Gastrocnemius medialis (tissue), 4 donors: ENCODE measurements at regions of chr5 and their contacts with region 1.

Region 1: DNA sequence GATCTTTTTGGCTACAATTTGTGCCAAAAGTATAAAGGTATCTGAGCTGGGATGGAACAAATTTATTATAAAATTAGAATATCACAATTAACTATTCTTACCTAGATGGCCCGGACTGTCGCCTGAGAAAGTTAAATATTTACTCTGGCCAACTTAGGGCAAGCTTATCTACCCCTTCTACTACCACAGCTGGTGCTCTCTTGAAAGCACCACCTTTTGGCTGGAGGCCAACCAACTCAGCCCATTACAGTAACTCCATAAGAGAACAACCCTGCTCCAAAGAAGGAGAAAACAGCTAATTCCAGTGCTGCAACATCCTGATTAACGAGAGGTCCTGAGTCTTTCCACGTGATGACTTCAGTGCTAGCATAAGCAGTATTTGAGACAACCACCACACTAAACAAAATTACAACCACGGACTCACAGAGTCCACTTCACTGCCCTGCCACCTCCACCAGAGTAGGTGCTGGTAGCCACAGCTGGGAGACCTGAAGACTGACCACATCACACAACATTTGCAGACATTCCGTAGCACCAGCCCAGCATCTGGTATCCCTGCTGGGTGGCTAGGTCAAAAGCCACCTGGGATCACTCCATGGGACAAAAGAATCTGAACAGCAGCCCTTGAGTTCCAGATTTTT is 43.2 kb downstream of the RGMB start:
- DNase-seq: no peak
- ATAC-seq: no peak
- H3K4me3 ChIP-seq: no peak overlapping the region
- H3K27ac ChIP-seq: no peak overlapping the region
- H3K4me1 ChIP-seq: no peaks in the 10 kb centered on the region
- H3K27me3 ChIP-seq: no peaks in the 10 kb centered on the region
- CTCF ChIP-seq: no peak
- POLR2A ChIP-seq: no peak

Region 2: GRCh38 chr5:97224112-97224750 is 1592.5 kb before region 1 on chr5:
- in situ Hi-C with region 1: loop called in 1 of 4 experiments (anchors 25 kb)
- intact Hi-C with region 1: no loop called
- DNase-seq: no peak
- ATAC-seq: no peak
- H3K4me3 ChIP-seq: no peak overlapping the region
- H3K27ac ChIP-seq: no peak overlapping the region
- H3K4me1 ChIP-seq: no peaks in the 10 kb centered on the region
- H3K27me3 ChIP-seq: no peaks in the 10 kb centered on the region
- CTCF ChIP-seq: no peak
- POLR2A ChIP-seq: no peak

Region 3: DNA sequence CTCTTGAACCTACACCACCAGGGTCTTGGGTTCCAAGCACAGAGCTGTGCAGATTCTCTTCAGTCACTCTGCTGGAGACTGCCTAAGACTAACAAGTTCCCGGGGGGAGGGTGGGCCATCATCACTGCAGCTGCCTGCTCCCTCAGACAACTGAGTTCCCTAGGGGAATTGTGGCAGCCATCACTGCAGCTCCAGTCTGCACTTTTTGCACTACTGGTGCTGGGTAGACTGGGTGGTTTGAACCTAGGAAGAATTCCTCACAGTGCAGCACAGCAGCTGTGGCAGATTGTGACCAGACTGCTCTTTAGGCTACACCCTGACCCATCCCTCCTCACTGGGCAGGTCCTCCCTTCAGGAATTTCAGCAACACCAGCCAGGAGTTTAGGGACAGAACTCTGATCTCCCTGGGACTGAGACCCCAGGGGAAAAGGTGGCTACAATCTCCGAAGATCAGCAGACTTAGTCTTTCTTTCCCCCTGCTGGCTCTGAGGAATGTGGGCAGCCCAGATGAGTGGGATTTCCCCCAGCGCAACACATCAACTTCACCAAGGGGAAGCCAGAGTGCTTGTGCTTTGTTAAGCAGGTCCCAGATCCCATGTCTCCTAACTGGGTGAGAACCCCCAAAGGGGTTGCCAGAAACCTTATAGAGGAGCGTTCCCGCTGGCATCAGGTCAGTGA is 74.2 kb before region 1 on chr5:
- in situ Hi-C with region 1: no loop called
- intact Hi-C with region 1: no loop called
- DNase-seq: no peak
- ATAC-seq: no peak
- H3K4me3 ChIP-seq: no peak overlapping the region
- H3K27ac ChIP-seq: no peak overlapping the region
- H3K4me1 ChIP-seq: no peaks in the 10 kb centered on the region
- H3K27me3 ChIP-seq: no peaks in the 10 kb centered on the region
- CTCF ChIP-seq: no peak
- POLR2A ChIP-seq: no peak

Region 4: DNA sequence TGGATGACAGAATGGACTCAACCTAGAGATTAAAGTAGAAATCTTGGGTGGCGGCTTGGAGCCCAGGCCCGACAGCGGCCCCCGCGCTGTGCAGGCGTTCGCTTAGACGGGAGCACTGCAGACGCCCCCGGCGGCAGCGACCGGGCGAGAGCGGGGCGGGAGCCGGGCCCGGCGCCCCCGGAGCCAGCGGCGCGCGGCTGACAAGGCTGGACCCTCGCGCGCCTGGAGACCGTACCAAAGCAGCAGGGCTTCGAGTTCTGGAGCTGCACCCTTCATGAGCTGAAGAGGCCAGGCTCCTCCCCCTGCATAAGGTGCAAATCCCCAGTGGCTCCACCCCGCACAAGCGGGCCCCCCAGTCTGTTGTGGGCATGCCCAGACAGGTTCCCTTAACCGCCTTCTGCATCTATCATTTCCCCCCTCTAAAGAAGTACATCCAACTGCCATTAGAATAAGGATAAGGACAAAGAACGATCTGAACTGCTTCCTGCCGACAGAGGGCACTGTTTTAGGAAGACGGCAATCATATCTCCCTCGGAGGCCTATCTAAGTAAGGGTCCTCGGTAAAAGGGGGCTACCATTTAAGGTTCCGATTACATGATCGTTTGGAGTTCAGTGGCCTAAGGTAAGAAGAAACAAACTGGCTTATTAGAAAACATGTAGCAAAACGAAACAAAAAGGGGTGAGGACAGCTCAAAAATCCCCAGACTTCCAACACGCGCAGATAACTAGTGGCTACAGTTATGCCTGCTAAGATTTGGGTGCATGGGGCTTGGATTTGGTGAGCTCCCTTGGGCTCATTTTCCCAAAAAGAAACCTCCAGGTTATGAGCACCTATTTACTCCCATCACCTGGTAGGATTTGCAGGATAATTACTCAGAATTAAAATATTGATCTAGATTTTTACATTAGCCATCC is 23.0 kb after region 1 on chr5:
- in situ Hi-C with region 1: no loop called
- intact Hi-C with region 1: no loop called
- DNase-seq: no peak
- ATAC-seq: no peak
- H3K4me3 ChIP-seq: no peak overlapping the region
- H3K27ac ChIP-seq: no peak overlapping the region
- H3K4me1 ChIP-seq: no peaks in the 10 kb centered on the region
- H3K27me3 ChIP-seq: no peaks in the 10 kb centered on the region
- CTCF ChIP-seq: no peak
- POLR2A ChIP-seq: no peak

Region 5: DNA sequence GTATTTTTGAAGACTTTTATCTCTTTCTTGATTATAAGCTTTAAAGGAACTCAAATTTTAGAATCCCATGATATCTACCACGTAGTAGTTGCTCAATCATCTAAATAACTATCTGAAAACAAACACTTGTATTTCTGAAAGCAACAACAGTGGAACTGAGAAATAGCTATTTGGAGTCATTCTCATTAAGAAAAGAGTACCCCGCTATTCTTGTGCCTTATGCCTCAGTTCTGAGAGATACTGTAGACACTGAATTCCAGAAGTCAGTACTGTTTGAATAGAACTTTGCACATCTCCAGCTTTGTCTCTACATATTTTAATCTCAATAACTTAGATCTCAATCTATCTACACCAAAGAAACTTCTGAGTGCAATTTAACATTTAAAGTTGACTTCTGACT is 100.7 kb after region 1 on chr5:
- in situ Hi-C with region 1: no loop called
- intact Hi-C with region 1: no loop called
- DNase-seq: no peak
- ATAC-seq: no peak
- H3K4me3 ChIP-seq: no peak overlapping the region
- H3K27ac ChIP-seq: no peak overlapping the region
- H3K4me1 ChIP-seq: peaks cover 18 to 20% of the 10 kb centered on the region in 2 donors
- H3K27me3 ChIP-seq: no peaks in the 10 kb centered on the region
- CTCF ChIP-seq: no peak
- POLR2A ChIP-seq: no peak

Region 6: GRCh38 chr5:99122976-99123375 is 306.3 kb after region 1 on chr5:
- in situ Hi-C with region 1: no loop called
- intact Hi-C with region 1: no loop called
- DNase-seq: no peak
- ATAC-seq: no peak
- H3K4me3 ChIP-seq: no peak overlapping the region
- H3K27ac ChIP-seq: no peak overlapping the region
- H3K4me1 ChIP-seq: no peaks in the 10 kb centered on the region
- H3K27me3 ChIP-seq: no peaks in the 10 kb centered on the region
- CTCF ChIP-seq: no peak
- POLR2A ChIP-seq: no peak